Activated naive CD4-positive, alpha-beta T cell treated with anti-CD3 and anti-CD28 coated beads for 36 hours (primary cell): ENCODE measurements at regions of chr10 and their contacts with region 1.

Region 1: DNA sequence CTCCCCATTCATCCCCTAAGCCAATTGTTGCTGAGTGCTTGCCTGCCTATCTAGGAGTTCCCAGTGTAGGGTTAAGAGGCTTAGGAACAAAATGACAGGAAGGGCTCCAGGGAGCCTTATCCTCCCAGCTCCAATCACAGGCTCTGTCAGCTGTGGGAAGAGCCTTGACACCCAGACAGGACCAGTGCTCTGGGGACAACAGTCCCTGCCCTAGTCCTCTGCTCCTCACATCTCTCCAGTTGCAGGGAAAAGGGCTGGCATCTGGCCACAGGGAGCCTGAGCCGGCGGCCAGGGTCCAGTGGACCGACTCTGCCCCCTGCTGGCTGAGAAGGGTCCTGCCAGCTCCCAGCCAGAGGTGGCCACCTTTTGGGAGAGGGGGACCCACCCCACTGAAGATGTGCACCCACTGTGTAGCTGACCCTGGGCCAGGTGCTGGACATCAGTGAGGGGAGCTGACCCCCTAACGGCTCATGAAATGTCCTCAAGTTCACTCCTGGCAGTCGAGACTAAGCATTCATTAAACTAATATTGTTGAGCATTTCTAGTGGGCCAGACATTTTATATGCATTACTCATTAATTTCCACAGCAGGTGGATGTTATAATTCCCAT is 17.6 kb downstream of the DNAJB12 start:
- DNase-seq: peak; percentile 79
- H3K4me3 Mint-ChIP-seq: no peak overlapping the region
- H3K27ac Mint-ChIP-seq: peak overlapping the region; percentile 100
- H3K4me1 Mint-ChIP-seq: peaks cover 52% of the 10 kb centered on the region
- H3K27me3 Mint-ChIP-seq: no peaks in the 10 kb centered on the region

Region 2: GRCh38 chr10:71333129-71333887 is 1003.8 kb before region 1 on chr10:
- CTCF ChIA-PET with region 1: no interaction called
- intact Hi-C with region 1: no loop called
- DNase-seq: no peak
- H3K4me3 Mint-ChIP-seq: no peak overlapping the region
- H3K27ac Mint-ChIP-seq: no peak overlapping the region
- H3K4me1 Mint-ChIP-seq: no peaks in the 10 kb centered on the region
- H3K27me3 Mint-ChIP-seq: no peaks in the 10 kb centered on the region

Region 3: GRCh38 chr10:72126184-72126871 is 210.8 kb before region 1 on chr10:
- CTCF ChIA-PET with region 1: interaction called, 53 read pairs
- intact Hi-C with region 1: no loop called
- DNase-seq: no peak
- H3K4me3 Mint-ChIP-seq: no peak overlapping the region
- H3K27ac Mint-ChIP-seq: peak overlapping the region; percentile 16
- H3K4me1 Mint-ChIP-seq: peaks cover 46% of the 10 kb centered on the region
- H3K27me3 Mint-ChIP-seq: no peaks in the 10 kb centered on the region

Region 4: DNA sequence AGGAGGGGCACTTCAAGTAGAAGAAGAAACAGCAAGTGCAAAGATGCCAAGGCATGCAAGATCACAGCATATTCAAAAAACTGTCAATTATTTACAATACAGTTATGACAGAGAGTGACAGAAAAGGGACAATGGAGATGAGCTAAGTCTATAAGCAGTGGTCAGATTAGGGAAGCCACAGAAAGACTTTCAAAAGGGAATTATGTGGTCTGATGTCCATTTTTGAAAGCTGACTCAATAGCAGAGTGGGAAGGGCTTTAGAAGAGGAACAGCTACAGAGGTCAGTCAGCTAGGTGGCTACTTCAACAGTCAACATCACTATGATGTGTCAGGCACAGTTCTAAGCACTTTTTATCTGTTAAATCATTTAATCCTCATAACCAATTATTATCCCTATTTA is 203.6 kb before region 1 on chr10:
- CTCF ChIA-PET with region 1: interaction called, 53 read pairs
- intact Hi-C with region 1: loop called (anchors 1 kb)
- DNase-seq: no peak
- H3K4me3 Mint-ChIP-seq: no peak overlapping the region
- H3K27ac Mint-ChIP-seq: no peak overlapping the region
- H3K4me1 Mint-ChIP-seq: peaks cover 39% of the 10 kb centered on the region
- H3K27me3 Mint-ChIP-seq: no peaks in the 10 kb centered on the region

Region 5: GRCh38 chr10:72215652-72216549 is 121.2 kb before region 1 on chr10 and contains the starts of genes ANAPC16 and ASCC1:
- CTCF ChIA-PET with region 1: interaction called, 11 read pairs
- intact Hi-C with region 1: loop called (anchors 1 kb)
- DNase-seq: peak; percentile 93
- H3K4me3 Mint-ChIP-seq: peak within 1 kb of the TSS; percentile 91
- H3K27ac Mint-ChIP-seq: peak within 1 kb of the TSS; percentile 98
- H3K4me1 Mint-ChIP-seq: peaks cover 67% of the 10 kb centered on the region
- H3K27me3 Mint-ChIP-seq: no peaks in the 10 kb centered on the region
- total RNA-seq, gene ANAPC16: 127 to 128 TPM
- total RNA-seq, gene ASCC1: 61.6 to 68.5 TPM

Region 6: DNA sequence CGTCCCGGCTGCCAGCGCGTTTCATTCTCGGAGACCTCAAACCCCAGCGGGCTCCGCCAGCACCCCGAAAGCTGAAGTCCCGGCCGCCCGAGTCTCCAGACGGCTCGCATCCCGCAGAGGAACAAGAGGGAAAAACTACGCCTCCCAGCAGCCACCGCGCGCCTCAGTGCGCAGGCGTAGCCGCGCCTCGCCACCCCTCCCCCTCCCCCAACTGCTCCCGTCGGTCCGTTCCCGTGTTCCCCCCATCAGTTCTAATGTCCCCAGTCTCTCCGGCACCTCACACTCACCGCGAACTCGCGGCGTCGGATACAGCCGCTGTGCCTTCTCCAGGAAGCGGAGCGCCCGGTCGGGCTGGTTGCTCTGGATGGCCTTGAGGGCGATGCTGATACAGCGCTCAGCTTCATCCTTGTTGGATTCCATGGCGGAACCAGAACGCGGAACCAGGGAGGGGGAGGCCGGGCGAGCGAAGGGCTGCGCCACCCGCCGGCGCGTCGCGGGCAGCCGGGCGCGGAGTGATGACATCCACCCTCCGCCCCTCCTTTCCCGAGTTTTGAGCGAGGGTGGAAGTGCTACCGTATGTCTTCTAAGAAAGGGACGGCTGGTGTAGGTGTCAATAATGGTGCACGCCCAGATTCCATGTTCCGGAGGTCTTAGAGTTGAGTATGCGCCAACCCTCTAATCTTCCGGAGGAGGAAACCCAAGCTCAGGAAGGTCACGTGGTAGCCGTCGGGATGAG is 17.5 kb after region 1 on chr10 and contains the start of gene DNAJB12:
- CTCF ChIA-PET with region 1: interaction called, 20 read pairs
- intact Hi-C with region 1: no loop called
- DNase-seq: peak; percentile 91
- H3K4me3 Mint-ChIP-seq: peak within 1 kb of the TSS; percentile 96
- H3K27ac Mint-ChIP-seq: peak within 1 kb of the TSS; percentile 97
- H3K4me1 Mint-ChIP-seq: peaks cover 34% of the 10 kb centered on the region
- H3K27me3 Mint-ChIP-seq: no peaks in the 10 kb centered on the region
- total RNA-seq, gene DNAJB12: 13.7 to 14.1 TPM